Heart right ventricle (tissue), 16 donors: ENCODE measurements at regions of chr3 and their contacts with region 1.

Region 1: GRCh38 chr3:29597376-29598013 is 316.6 kb downstream of the RBMS3 start:
- DNase-seq: no peak
- ATAC-seq: no peak
- H3K4me3 ChIP-seq: no peak overlapping the region
- H3K27ac ChIP-seq: no peak overlapping the region
- H3K4me1 ChIP-seq: peaks cover 0 to 19% (median 7%) of the 10 kb centered on the region in 9 donors
- H3K27me3 ChIP-seq: no peaks in the 10 kb centered on the region
- CTCF ChIP-seq: no peak

Region 2: DNA sequence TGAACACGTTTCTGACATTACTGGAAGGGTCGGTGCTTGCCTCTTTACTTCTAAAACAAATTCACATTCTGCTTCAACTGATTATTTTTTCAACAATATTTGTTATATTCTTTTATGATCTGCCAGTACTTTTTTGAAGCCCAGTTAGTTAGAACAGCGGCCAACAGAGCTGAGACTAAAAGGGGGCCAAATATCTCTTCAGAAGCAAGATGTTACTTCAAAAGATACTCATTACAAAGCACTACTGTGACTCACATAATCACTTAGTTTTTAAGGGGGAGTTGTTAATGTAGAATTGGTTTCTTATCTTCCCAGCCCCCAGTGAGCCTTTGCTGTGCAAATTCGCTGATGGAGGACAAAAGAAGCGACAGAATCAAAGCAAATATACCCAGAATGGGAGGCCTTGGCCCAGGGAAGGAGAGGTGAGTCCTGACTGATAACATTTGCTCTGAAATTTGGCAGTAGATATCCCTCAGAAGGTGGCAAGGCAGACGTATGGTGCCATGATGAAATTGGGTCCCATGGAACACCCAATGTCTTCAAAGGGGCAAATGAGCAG is 271.1 kb after region 1 on chr3:
- intact Hi-C with region 1: loop called in 1 of 10 experiments (anchors 10 kb)
- DNase-seq: no peak
- ATAC-seq: no peak
- H3K4me3 ChIP-seq: no peak overlapping the region
- H3K27ac ChIP-seq: no peak overlapping the region
- H3K4me1 ChIP-seq: no peaks in the 10 kb centered on the region
- H3K27me3 ChIP-seq: no peaks in the 10 kb centered on the region
- CTCF ChIP-seq: no peak